ENCODE measurements at regions of chr1 and their contacts with region 1.

Region 1: DNA sequence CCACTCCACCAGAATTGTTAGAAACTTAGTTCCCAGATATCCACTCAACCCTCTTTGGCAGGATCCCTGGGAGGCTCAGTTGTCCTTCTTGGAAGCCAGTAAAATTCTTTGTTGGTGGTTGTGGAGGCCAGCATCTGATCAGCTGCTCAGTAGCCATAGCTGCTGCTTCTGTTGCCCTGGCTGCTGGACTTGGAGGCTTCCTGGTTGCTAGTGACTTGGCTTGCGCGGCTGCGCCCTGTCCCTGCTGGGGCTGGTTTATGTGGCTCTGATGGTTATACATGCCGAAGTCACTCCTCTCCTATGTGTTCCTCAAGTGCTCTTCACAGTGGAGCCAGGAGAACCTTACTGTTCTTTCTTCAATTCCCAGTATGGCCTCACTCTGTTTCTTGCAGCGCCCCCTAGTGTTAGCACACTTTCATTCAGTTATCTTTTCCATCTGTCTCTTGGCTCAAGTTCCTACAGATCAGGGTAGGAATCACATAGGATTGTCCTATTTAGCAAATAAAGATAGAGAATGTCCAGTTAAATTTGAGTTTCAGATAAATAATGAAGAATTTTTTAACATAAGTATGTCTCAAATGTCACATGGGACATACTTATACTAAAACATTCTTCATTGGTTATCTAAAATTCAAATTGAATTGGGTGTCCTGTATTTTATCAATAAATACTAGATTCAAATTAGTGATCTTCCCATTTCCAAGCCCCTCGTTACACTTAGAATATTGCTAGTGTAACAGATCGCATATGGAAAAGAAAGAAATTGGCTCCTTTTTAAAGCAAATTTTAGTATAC is 176.4 kb downstream of the TGFB2 start:
- DNase-seq: peak; percentile 65
- H3K4me3 ChIP-seq: no peak overlapping the region
- H3K27ac ChIP-seq: no peak overlapping the region
- H3K4me1 ChIP-seq: peaks cover 4% of the 10 kb centered on the region
- H3K27me3 ChIP-seq: no peaks in the 10 kb centered on the region
- CTCF ChIP-seq: peak; percentile 45 to 72
- POLR2A ChIP-seq: no peak

Region 2: DNA sequence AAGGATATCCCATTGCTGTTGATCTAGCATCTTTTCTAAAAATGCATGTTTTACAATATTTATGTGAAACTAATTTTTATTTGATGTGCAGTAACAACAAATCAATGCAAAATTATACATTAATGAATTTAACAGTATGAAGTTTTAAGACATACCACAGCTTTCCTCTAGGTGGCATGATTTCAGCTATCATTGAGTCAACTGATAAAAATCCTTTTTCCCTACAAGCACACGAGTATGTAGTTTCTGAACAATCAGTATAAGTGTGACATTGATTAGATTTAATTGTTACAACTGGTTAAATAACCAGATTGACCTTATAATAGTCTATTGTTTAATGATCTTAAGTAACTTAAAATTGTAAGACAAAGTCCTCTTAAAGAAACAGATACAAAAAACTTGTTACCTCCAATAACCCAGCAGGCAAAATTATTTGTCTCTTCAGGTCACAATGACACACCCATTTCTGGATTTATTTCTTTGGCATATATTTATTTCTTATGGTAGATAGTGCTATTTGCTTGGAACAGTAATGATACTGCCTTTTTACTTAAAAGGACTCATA is 182.2 kb before region 1 on chr1:
- CTCF ChIA-PET with region 1: interaction called, 9 read pairs
- POLR2A ChIA-PET with region 1: no interaction called
- dilution Hi-C with region 1: no loop called
- intact Hi-C with region 1: loop called (anchors 1 kb)
- DNase-seq: peak; percentile 74
- H3K4me3 ChIP-seq: no peak overlapping the region
- H3K27ac ChIP-seq: no peak overlapping the region
- H3K4me1 ChIP-seq: no peaks in the 10 kb centered on the region
- H3K27me3 ChIP-seq: no peaks in the 10 kb centered on the region
- CTCF ChIP-seq: peak; percentile 41 to 48
- POLR2A ChIP-seq: no peak

Region 3: DNA sequence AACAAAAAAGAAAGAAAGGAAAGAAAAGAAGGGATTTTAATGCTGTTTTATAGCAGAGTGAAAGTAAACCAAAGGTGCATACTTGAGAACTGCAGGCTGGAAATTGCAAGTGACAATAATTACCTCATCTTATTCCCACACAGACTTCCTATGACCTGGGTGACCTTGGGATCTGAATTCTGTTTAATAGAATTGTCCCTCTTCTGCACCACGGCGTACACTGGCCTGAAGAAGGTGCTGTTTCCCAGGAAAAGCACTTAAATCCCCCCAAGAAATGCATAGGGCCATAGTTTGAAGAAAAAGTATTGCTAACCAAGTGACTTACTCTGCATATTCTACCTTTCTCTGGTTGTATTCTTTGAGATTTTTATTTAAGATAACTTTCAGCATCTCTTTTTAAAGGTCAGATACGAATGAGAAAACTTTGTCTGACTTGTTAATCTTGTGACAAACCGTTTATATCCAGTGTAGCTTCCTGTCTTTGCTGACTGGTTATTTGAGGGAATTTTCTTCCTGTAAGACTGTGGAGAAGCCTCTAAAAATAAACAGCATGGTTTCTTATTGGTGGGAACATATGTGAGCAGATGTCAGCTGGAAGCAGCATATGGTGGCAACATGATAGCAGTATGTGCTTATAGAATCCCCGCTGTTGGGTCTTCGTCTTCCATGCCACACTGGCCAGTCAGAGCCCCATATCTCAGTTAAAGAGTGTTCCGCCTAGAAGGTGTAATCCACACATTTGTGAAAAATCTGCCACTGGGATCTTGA is 160.1 kb before region 1 on chr1:
- CTCF ChIA-PET with region 1: interaction called, 5 read pairs
- POLR2A ChIA-PET with region 1: no interaction called
- dilution Hi-C with region 1: no loop called
- intact Hi-C with region 1: loop called (anchors 1 kb)
- DNase-seq: peak; percentile 81
- H3K4me3 ChIP-seq: no peak overlapping the region
- H3K27ac ChIP-seq: no peak overlapping the region
- H3K4me1 ChIP-seq: peaks cover 6% of the 10 kb centered on the region
- H3K27me3 ChIP-seq: no peaks in the 10 kb centered on the region
- CTCF ChIP-seq: peak; percentile 55 to 70
- POLR2A ChIP-seq: no peak

Region 4: DNA sequence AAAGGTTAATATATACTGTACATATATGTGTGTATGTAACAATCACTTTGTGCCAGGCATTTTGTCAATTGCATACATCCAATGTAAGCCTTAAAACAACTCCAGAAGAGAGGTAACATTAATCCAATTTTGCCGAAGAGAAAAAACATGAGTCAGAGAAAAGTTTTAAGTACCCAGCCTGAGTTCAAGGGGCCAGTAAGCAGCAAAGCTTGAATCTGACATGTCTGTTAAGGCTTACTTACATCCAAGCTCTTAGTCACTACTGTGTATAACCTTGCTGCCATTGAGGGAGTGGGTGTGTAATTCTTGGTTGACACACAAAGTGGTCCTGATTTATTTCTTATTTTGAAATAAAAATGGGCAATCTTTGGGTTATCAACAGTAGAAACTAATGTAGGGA is 291.7 kb after region 1 on chr1:
- CTCF ChIA-PET with region 1: no interaction called
- POLR2A ChIA-PET with region 1: no interaction called
- dilution Hi-C with region 1: no loop called
- intact Hi-C with region 1: no loop called
- DNase-seq: no peak
- H3K4me3 ChIP-seq: no peak overlapping the region
- H3K27ac ChIP-seq: no peak overlapping the region
- H3K4me1 ChIP-seq: peaks cover 8% of the 10 kb centered on the region
- H3K27me3 ChIP-seq: no peaks in the 10 kb centered on the region
- CTCF ChIP-seq: no peak
- POLR2A ChIP-seq: no peak

Region 5: DNA sequence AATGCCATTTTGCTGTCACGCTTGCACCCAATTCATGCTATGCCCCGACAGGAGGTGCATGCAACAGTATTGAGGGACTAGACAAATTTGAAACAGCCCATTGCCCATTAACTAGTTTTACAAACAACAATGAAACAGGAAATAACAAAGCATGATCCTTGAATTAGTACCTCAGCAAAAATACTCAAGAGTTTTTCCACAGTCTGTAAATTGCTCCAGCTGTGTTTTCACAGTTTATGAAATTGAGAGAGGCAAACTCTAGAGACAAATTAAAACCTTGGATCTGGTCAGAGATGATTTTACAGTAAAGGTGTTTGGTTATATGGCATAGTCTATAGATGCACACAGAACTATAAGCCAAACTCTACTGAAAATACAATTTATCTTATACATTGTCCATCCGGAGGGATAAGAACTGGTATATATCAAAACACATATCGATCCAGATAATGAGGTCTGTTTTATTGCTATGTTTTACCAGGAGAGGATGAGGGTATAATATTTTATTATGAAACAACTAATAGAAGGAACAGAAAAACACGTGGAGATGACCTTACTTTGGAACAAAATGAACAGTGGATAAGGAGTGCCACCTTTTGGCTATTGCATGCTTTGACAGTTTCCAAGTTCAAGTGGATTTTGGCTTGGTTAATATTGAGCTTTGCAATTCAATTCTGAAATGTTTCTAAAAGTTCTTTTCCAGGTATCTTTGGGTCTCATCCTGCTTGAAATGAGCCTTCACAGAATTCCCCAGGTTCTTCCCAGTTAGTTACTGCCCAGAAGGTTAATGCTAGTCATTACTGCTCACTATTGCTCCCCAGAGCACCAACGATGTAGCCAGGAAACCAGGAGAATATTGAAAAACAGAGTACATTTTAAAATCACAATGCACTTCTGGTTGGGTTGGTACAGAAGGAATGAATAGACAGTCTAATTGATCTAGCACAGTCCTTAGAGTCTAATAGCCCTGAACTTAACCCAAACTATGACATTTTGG is 1045.7 kb after region 1 on chr1:
- CTCF ChIA-PET with region 1: no interaction called
- POLR2A ChIA-PET with region 1: no interaction called
- dilution Hi-C with region 1: no loop called
- intact Hi-C with region 1: loop called (anchors 10 kb)
- DNase-seq: peak; percentile 45
- H3K4me3 ChIP-seq: no peak overlapping the region
- H3K27ac ChIP-seq: no peak overlapping the region
- H3K4me1 ChIP-seq: no peaks in the 10 kb centered on the region
- H3K27me3 ChIP-seq: peaks cover 0 to 3% of the 10 kb centered on the region in 2 experiments
- CTCF ChIP-seq: peak; percentile 19 to 32
- POLR2A ChIP-seq: no peak